ENCODE measurements at regions of chr5 and their contacts with region 1.

Region 1: DNA sequence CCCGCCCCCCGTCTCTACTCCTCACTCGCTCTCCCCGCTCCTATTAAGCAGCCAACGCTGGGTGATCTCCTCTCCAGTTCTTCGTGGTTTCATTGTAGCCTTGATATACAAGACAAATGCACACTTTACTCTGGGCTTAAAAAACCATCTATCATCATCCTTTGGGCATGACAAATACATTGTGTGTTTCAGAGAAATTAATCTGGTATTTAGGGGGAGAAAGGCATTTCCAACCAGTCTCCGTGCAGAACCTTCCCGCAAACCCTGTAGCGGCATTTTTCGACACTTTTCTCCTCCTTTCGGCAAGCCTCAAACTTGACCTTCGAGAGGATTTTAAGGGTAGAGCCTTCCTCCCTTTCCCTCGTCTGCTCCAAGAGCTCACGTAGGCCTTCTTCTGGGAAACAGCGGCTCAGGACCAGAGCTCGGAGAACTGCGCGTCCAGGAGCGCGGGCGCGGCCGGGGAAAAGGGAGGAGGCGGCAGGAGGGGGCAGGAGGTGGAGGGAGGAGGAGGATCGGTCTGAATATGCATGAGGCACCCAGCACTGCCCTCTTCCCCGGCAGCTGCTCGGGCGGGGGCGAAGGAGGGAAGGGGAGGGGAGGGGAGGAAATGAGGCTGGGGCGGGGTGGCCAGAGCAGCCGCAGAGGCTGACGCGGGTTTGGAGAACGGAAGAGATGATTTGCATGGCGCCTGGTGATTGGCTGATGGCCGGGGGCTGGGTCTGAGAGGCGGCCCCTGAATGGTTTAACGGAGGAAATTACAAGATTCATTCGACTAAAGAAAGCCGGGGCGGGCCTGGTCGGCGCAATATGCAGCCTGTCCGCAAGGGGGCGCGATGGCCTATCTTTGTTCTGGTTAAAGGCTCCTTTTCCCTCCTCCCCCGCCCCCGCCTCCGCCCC is 127.5 kb downstream of the TMEM161B start:
- DNase-seq: peak; percentile 98
- H3K4me3 ChIP-seq: peak overlapping the region; percentile 45
- CTCF ChIP-seq: peak; percentile 55

Region 2: DNA sequence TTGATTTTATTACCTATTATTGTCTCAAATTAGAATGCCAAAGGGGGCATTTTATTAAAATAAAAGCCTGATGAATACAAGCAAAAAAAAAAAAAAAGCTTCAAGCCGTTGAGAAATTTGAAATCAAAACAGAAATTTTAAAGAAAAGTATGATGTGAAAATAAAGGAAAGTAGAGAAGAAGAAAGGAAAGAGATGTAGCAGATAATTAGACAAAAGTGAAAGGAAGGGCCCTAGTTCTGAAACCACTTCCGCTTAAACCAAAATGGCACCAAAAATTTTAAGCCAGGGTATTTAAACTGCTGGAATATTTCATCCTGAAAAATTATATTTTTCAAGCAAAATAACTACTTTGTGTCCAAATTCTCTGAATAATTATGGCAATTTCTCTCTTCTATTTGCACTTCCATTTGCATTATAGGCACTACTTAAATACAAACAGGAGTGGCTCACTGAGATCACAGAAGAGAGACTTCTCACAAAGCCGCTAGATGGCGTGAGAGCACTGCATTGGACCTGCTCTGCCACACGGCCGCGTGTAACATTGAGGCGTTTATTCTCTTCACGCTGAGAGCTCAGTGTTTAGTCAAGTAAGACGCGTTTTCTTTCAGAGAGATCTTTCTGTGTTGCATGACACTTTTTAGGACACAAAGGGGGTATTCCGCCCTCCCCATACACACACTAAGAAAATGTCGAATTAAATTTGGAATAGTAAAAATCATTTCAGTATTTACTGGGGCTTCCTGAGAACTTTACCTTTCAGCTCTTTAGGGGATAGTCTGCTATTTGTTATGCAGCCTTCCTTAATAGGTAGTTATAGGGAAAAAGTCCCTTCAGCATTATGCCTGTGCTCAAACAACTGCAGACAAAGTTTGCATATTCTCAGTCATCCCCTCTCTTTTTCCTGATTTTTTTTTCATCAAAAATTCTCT is 360.0 kb before region 1 on chr5:
- in situ Hi-C with region 1: loop called (anchors 5 kb)
- DNase-seq: peak; percentile 91
- H3K4me3 ChIP-seq: no peak overlapping the region
- CTCF ChIP-seq: peak; percentile 92

Region 3: GRCh38 chr5:88268385-88269184 is 127.5 kb after region 1 on chr5 and contains the start of gene TMEM161B:
- in situ Hi-C with region 1: loop called (anchors 10 kb)
- DNase-seq: peak; percentile 68
- H3K4me3 ChIP-seq: peak within 1 kb of the TSS; percentile 99
- CTCF ChIP-seq: no peak

Region 4: GRCh38 chr5:88398316-88398715 is 257.2 kb after region 1 on chr5:
- in situ Hi-C with region 1: loop called (anchors 5 kb)
- DNase-seq: no peak
- H3K4me3 ChIP-seq: no peak overlapping the region
- CTCF ChIP-seq: no peak

Region 5: DNA sequence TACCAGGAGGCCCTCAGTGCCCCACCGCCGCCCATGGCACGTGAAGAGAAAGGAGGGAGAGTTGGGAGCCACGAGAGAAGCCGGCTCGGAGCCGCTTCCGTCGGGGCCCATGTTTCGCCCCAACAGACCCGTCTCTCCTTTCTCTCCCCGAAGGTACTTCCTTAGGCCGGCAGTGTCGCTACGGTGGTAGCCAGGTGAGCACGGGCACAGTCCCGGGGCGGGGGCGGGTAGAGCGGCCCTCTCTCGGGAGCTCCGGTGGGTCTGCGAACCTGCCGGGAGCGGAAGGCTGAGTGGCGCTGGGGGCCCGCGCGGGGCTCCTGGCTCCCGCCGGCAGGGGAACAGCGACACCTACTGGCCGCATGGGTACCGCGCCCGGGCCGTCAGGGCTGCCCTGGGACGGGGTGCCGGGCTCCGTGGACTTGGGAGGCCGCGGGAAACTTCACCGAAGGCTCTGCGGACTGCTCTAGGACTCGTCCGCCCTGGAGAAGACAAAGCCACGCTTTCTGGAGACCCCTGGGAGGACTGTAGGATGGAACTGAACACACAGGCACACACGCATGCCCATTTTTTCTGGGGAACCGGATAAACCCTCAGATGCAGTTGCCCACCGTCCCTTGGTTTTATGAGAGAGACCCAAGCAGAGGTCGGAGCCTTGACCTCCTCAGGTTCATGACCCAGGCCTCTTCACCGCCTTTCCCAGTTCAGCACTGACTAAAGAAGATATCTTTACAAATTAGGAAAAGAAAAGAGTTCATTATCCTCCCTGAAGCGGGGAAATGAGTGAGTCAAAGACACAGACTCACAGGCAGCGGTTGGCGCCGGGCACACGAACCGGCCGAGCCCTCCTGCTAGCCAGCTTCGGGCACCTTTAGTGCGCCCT is 539.4 kb after region 1 on chr5:
- in situ Hi-C with region 1: loop called (anchors 5 kb)
- DNase-seq: no peak
- H3K4me3 ChIP-seq: peak overlapping the region; percentile 68
- CTCF ChIP-seq: peak; percentile 89

Measured in astrocyte of the cerebellum (primary cell).